ENCODE measurements at regions of chr9 and their contacts with region 1.

Region 1: GRCh38 chr9:120936011-120936763 is 9.6 kb upstream of the TRAF1 start:
- DNase-seq: peak; percentile 89 to 96
- ATAC-seq: peak; percentile 88 to 93
- H3K4me3 ChIP-seq: no peak overlapping the region
- H3K27ac ChIP-seq: peak overlapping the region; percentile 83 to 85
- H3K4me1 ChIP-seq: peaks cover 45% of the 10 kb centered on the region
- CTCF ChIP-seq: peak; percentile 95
- EP300 ChIP-seq: no peak
- POLR2A ChIP-seq: no peak
- RAD21 ChIP-seq: peak; percentile 89

Region 2: DNA sequence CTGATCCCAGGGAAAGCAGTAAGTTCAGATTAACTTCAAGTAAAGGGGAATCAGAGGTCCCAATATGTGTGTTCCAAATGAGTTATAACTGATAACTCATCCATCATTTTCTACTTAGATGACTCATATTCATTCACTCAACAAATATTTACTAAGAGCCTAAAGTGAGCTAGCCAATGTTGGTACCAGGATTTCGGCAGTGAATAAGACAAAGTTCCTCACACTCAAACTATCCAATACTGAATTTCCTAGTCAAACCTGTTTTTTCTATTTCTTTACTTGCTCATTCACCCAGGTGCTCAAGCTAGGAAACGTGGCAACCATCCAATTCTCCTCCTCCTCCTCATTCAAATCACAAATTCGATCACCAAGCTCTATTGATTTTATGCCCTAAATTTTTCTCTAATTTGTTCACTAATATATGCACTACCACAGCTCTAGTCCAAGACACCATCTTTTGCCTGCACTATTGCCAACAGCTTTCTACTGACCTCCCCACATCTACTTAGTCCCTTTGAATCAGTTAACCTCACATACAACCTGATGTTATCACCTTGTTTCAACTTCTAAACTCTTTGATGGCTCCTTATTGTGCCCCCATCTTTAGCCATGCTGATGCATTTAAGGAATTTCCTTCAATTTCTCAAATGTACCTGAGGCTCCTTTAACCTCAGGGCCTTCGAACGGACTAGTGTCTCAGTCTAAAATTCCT is 168.6 kb before region 1 on chr9:
- CTCF ChIA-PET with region 1: interaction called, 11 read pairs
- POLR2A ChIA-PET with region 1: no interaction called
- DNase-seq: no peak
- ATAC-seq: peak in 1 of 2 experiments; percentile 45; a peak in 3 of 6 replicates
- H3K4me3 ChIP-seq: no peak overlapping the region
- H3K27ac ChIP-seq: no peak overlapping the region
- H3K4me1 ChIP-seq: peaks cover 20% of the 10 kb centered on the region
- CTCF ChIP-seq: no peak
- EP300 ChIP-seq: no peak
- POLR2A ChIP-seq: no peak
- RAD21 ChIP-seq: no peak

Region 3: GRCh38 chr9:120886490-120886967 is 49.7 kb before region 1 on chr9:
- CTCF ChIA-PET with region 1: interaction called, 13 read pairs
- POLR2A ChIA-PET with region 1: no interaction called
- DNase-seq: no peak
- ATAC-seq: peak in 1 of 2 experiments; percentile 37; a peak in 2 of 6 replicates
- H3K4me3 ChIP-seq: no peak overlapping the region
- H3K27ac ChIP-seq: no peak overlapping the region
- H3K4me1 ChIP-seq: no peaks in the 10 kb centered on the region
- CTCF ChIP-seq: no peak
- EP300 ChIP-seq: no peak
- POLR2A ChIP-seq: no peak
- RAD21 ChIP-seq: no peak

Region 4: DNA sequence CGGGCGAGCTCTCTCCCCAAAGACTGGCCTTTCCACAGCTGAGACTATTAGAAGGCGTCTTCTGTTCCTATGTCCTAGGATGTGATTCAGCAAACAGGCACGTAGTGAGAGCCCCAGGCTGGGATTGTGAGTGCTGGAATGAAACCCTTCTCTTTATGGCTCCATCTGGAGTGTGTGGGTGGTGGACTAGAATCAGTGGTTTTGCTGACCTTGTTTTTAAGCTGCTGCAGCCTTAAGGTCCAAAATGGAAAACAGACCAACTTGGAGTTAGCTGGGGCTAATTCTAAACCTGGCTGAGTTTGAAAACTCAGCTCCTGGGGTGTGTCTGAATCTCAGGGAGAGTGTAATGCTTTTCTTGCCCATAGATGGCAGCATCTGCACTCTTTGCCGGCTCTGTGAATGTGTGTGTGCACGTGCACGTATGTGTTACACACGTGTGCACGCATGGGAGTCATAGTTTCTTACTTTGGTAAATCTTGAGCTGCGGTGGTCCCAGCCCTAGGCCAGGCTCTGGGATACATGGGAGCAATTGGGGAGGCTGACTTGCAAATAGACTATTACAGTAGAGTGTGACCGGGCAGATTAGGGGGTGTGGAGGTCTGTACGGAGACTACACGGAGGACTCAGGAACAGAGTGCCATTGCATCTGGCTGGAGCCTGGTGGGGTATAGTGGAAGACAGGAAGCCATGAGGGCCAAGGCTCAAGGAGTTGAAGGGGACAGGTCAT is 342.5 kb after region 1 on chr9:
- CTCF ChIA-PET with region 1: no interaction called
- POLR2A ChIA-PET with region 1: no interaction called
- DNase-seq: peak in 1 of 2 experiments; percentile 75
- ATAC-seq: peak; percentile 75 to 87
- H3K4me3 ChIP-seq: no peak overlapping the region
- H3K27ac ChIP-seq: peak overlapping the region; percentile 58 to 83
- H3K4me1 ChIP-seq: peaks cover 57% of the 10 kb centered on the region
- CTCF ChIP-seq: peak; percentile 88
- EP300 ChIP-seq: no peak
- POLR2A ChIP-seq: no peak
- RAD21 ChIP-seq: peak; percentile 80 to 85

Region 5: DNA sequence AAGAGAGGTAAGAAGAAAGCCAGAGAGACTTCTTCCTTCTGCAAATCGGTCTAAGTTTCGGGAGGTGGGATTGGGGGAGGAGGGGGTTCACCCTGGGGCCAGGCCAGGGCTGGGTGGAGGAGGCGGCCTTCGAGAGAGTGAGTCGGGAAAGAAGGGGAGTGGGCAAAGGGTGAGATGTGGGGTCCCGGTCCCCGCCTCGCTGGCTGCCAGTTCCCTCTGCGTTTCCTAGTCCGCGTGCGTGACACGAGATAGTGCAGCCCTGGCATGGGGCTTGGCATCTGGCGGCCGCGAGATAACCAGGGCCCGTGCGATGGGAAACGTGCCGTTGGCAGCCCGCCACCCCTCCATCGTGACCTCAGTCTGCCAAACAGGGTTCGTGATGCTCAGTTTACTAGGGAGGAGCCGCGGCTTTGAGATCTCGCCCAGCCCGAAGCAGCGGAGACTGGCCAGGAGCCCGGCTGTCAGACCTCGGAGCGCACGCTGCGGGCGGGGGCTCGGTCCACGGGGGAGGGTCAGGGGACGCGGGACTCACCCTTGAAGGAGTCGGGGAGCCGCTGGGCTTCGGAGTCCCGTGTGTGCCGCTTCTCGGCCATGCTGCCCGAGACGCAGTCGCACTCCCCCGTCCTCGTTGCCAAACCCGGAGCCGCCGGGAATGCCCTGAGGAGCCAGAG is 433.5 kb after region 1 on chr9 and contains the start of gene STOM:
- CTCF ChIA-PET with region 1: no interaction called
- POLR2A ChIA-PET with region 1: no interaction called
- DNase-seq: peak in 1 of 2 experiments; percentile 47
- ATAC-seq: peak; percentile 60 to 77
- H3K4me3 ChIP-seq: peak within 1 kb of the TSS; percentile 74
- H3K27ac ChIP-seq: peak within 1 kb of the TSS; percentile 92 to 94
- H3K4me1 ChIP-seq: peaks cover 85% of the 10 kb centered on the region
- CTCF ChIP-seq: no peak
- EP300 ChIP-seq: no peak
- POLR2A ChIP-seq: peak; percentile 97
- RAD21 ChIP-seq: 0 out of 5 replicates have a peak, but pooled peaks of 1 of the 2 experiments have one; percentile 12
- polyA plus RNA-seq, gene STOM: 234 and 246 TPM in 2 replicates

Measured in A549 (cell line).